HepG2 (cell line): ENCODE measurements at regions of chr3 and their contacts with region 1.

Region 1: GRCh38 chr3:142586803-142587406 is 8.4 kb upstream of the ATR start:
- DNase-seq: peak; percentile 85
- ATAC-seq: peak; percentile 96
- H3K4me3 ChIP-seq: no peak overlapping the region
- H3K27ac ChIP-seq: no peak overlapping the region
- H3K4me1 ChIP-seq: peaks cover 1% of the 10 kb centered on the region
- H3K27me3 ChIP-seq: no peaks in the 10 kb centered on the region; a peak in 2 of 5 replicates
- CTCF ChIP-seq: peak; percentile 87
- EP300 ChIP-seq: no peak
- POLR2A ChIP-seq: no peak
- RAD21 ChIP-seq: peak; percentile 83

Region 2: DNA sequence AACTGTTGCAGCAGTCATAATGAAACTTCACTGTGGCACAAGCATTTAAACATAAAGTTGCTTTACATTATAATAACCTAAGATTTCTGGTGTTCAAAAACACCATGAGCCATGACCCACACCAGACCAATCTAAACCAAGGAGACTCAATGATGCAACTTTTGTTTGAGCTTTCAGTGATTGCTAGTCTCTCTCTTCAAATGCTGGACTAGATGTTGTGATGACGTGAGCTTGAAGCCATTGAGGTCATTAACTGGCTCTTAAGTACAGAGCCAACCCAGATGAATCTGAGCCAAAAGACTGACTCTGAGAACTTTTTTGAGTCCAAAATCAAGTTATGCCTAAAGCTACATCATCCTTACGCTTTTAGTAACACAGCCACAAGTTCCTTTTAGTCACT is 44.9 kb before region 1 on chr3:
- CTCF ChIA-PET with region 1: no interaction called
- POLR2A ChIA-PET with region 1: no interaction called
- in situ Hi-C with region 1: no loop called
- intact Hi-C with region 1: no loop called
- DNase-seq: no peak
- ATAC-seq: no peak
- H3K4me3 ChIP-seq: no peak overlapping the region
- H3K27ac ChIP-seq: no peak overlapping the region
- H3K4me1 ChIP-seq: no peaks in the 10 kb centered on the region
- H3K27me3 ChIP-seq: no peaks in the 10 kb centered on the region
- CTCF ChIP-seq: no peak
- EP300 ChIP-seq: no peak
- POLR2A ChIP-seq: no peak
- RAD21 ChIP-seq: no peak

Region 3: GRCh38 chr3:142680710-142681109 is 93.8 kb after region 1 on chr3:
- CTCF ChIA-PET with region 1: interaction called, 4 read pairs
- POLR2A ChIA-PET with region 1: no interaction called
- in situ Hi-C with region 1: loop called (anchors 5 kb)
- intact Hi-C with region 1: loop called (anchors 1 kb)
- DNase-seq: no peak
- ATAC-seq: peak; percentile 31; the same call in 1 of the 3 replicates
- H3K4me3 ChIP-seq: no peak overlapping the region
- H3K27ac ChIP-seq: no peak overlapping the region
- H3K4me1 ChIP-seq: no peaks in the 10 kb centered on the region
- H3K27me3 ChIP-seq: no peaks in the 10 kb centered on the region; a peak in 1 of 5 replicates
- CTCF ChIP-seq: peak; percentile 37
- EP300 ChIP-seq: no peak
- POLR2A ChIP-seq: no peak
- RAD21 ChIP-seq: no peak

Region 4: GRCh38 chr3:142723968-142724681 is 137.2 kb after region 1 on chr3 and contains the start of gene TRPC1:
- CTCF ChIA-PET with region 1: no interaction called
- POLR2A ChIA-PET with region 1: no interaction called
- in situ Hi-C with region 1: no loop called
- intact Hi-C with region 1: loop called (anchors 2 kb)
- DNase-seq: peak; percentile 76
- ATAC-seq: peak; percentile 89
- H3K4me3 ChIP-seq: peak within 1 kb of the TSS; percentile 82 to 97 (median 96)
- H3K27ac ChIP-seq: peak within 1 kb of the TSS; percentile 92
- H3K4me1 ChIP-seq: peaks cover 18% of the 10 kb centered on the region
- H3K27me3 ChIP-seq: no peaks in the 10 kb centered on the region; a peak in 1 of 5 replicates
- CTCF ChIP-seq: no peak; the same call in 1 of the 2 replicates
- EP300 ChIP-seq: no peak
- POLR2A ChIP-seq: peak; percentile 93 to 99
- RAD21 ChIP-seq: no peak; the same call in 1 of the 2 replicates
- total RNA-seq, gene TRPC1: 7.6 and 10.8 TPM in 2 replicates

Region 5: GRCh38 chr3:142828703-142829305 is 241.9 kb after region 1 on chr3:
- CTCF ChIA-PET with region 1: interaction called, 5 read pairs
- POLR2A ChIA-PET with region 1: no interaction called
- in situ Hi-C with region 1: no loop called
- intact Hi-C with region 1: loop called (anchors 10 kb)
- DNase-seq: peak; percentile 65
- ATAC-seq: peak; percentile 99
- H3K4me3 ChIP-seq: no peak overlapping the region
- H3K27ac ChIP-seq: no peak overlapping the region
- H3K4me1 ChIP-seq: no peaks in the 10 kb centered on the region
- H3K27me3 ChIP-seq: peaks cover 0 to 34% of the 10 kb centered on the region in 2 experiments; a peak in 1 of 5 replicates
- CTCF ChIP-seq: peak; percentile 98
- EP300 ChIP-seq: no peak
- POLR2A ChIP-seq: no peak
- RAD21 ChIP-seq: peak; percentile 96

Region 6: DNA sequence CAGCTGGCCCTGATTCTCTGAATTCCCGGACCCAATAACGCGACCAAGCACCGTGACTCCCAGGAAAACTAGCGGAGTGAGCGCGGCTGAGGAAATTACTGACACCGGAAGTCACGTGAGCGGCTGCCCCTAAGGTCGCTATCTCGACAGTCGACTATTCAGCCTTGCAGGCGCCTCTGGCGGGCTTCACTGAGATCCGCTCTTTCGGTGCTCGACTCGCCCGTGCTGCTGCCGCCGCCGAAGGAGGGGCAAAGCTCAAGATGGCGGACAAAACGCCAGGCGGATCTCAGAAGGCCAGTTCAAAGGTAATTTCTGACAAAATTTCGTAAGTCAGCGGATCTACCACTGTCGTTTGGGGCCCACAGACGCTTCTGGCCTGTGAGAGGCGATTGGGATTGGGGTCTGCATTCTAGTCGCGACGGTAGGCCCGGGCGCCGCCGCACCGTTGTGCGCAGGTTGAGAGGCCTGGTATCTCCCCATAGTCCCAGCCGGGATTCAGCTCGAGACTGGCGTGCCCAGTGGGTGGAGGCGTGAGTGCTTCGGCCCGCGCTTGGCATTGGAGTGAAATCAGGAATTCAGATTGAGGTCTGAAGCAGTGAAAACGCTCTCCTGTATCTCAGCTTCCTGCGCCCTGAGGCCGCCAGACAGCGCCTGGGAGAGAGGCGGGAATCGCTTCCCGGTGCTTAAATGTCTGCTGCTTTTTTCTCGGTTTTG is 414.6 kb after region 1 on chr3 and contains the start of gene U2SURP:
- CTCF ChIA-PET with region 1: no interaction called
- POLR2A ChIA-PET with region 1: no interaction called
- in situ Hi-C with region 1: no loop called
- intact Hi-C with region 1: loop called (anchors 2 kb)
- DNase-seq: peak; percentile 96
- ATAC-seq: peak; percentile 85
- H3K4me3 ChIP-seq: peak within 1 kb of the TSS; percentile 87 to 92 (median 90)
- H3K27ac ChIP-seq: peak within 1 kb of the TSS; percentile 89
- H3K4me1 ChIP-seq: peaks cover 60% of the 10 kb centered on the region
- H3K27me3 ChIP-seq: no peaks in the 10 kb centered on the region; a peak in 1 of 5 replicates
- CTCF ChIP-seq: no peak
- EP300 ChIP-seq: peak; percentile 64 to 80; a peak in 3 of 4 replicates
- POLR2A ChIP-seq: peak; percentile 95
- RAD21 ChIP-seq: 0 out of 2 replicates have a peak, but pooled peaks have one; percentile 40
- total RNA-seq, gene U2SURP: 173 and 250 TPM in 2 replicates